PC-9 (cell line): ENCODE measurements at regions of chr9 and their contacts with region 1.

Region 1: DNA sequence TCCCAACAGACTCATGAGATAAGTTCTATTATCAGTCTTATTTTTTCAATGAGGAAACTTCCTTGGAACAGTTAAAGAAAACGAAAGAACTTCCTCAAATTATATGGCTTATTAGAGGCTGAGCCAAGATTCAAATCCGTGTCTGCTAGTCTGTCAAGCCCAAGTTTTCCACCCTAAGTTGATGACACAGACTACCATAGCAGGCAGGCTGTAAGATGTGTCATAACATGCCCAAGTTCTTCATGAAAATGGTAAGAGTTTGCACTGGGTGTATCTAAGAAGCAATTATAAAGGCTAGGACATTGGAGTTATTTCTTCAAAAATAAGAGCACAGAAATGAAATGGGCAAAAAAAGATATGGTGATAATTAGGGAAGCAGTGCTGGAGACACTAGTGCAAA is 634.5 kb downstream of the BRINP1 start:
- DNase-seq: no peak
- H3K4me3 ChIP-seq: no peak overlapping the region
- H3K27ac ChIP-seq: no peak overlapping the region
- H3K4me1 ChIP-seq: no peaks in the 10 kb centered on the region
- H3K27me3 ChIP-seq: no peaks in the 10 kb centered on the region
- CTCF ChIP-seq: no peak

Region 2: DNA sequence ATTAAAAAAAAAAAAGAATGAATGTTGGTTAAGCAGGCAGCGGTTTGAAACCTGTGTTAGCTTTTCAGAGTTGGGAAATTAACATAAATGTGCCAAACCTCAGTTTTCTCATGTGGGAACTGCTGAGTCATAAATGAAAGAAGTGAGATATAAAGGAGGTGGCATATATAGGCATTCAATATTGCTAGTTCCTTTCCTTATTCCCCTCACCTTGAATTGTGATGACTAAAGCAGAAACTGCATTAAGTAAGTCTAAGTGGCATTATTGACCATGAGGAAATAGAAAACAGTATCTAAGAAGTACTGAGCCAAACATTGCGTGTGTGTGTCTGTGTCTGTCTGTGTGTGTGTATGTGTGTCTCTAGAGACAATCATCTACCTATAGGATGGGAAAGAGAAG is 339.3 kb before region 1 on chr9:
- CTCF ChIA-PET with region 1: no interaction called
- POLR2A ChIA-PET with region 1: interaction called, 12 read pairs
- intact Hi-C with region 1: no loop called
- DNase-seq: no peak
- H3K4me3 ChIP-seq: no peak overlapping the region
- H3K27ac ChIP-seq: no peak overlapping the region
- H3K4me1 ChIP-seq: no peaks in the 10 kb centered on the region
- H3K27me3 ChIP-seq: no peaks in the 10 kb centered on the region
- CTCF ChIP-seq: no peak

Region 3: GRCh38 chr9:118751848-118752223 is 17.1 kb after region 1 on chr9:
- CTCF ChIA-PET with region 1: no interaction called
- POLR2A ChIA-PET with region 1: no interaction called
- intact Hi-C with region 1: no loop called
- DNase-seq: no peak
- H3K4me3 ChIP-seq: no peak overlapping the region
- H3K27ac ChIP-seq: no peak overlapping the region
- H3K4me1 ChIP-seq: no peaks in the 10 kb centered on the region
- H3K27me3 ChIP-seq: no peaks in the 10 kb centered on the region
- CTCF ChIP-seq: no peak

Region 4: GRCh38 chr9:119861842-119862241 is 1127.1 kb after region 1 on chr9:
- CTCF ChIA-PET with region 1: no interaction called
- POLR2A ChIA-PET with region 1: no interaction called
- intact Hi-C with region 1: no loop called
- DNase-seq: no peak
- H3K4me3 ChIP-seq: no peak overlapping the region
- H3K27ac ChIP-seq: no peak overlapping the region
- H3K4me1 ChIP-seq: no peaks in the 10 kb centered on the region
- H3K27me3 ChIP-seq: no peaks in the 10 kb centered on the region
- CTCF ChIP-seq: no peak